GM12878 (cell line): ENCODE measurements at regions of chr5 and their contacts with region 1.

Region 1: GRCh38 chr5:143200781-143201398 is 202.6 kb downstream of the NR3C1 start:
- DNase-seq: no peak
- ATAC-seq: peak; percentile 69
- H3K4me3 ChIP-seq: no peak overlapping the region
- H3K27ac ChIP-seq: peak overlapping the region; percentile 14; the same call in 1 of the 2 replicates
- H3K4me1 ChIP-seq: peaks cover 17% of the 10 kb centered on the region
- H3K27me3 ChIP-seq: no peaks in the 10 kb centered on the region
- CTCF ChIP-seq: no peak
- EP300 ChIP-seq: no peak
- POLR2A ChIP-seq: no peak
- RAD21 ChIP-seq: no peak

Region 2: DNA sequence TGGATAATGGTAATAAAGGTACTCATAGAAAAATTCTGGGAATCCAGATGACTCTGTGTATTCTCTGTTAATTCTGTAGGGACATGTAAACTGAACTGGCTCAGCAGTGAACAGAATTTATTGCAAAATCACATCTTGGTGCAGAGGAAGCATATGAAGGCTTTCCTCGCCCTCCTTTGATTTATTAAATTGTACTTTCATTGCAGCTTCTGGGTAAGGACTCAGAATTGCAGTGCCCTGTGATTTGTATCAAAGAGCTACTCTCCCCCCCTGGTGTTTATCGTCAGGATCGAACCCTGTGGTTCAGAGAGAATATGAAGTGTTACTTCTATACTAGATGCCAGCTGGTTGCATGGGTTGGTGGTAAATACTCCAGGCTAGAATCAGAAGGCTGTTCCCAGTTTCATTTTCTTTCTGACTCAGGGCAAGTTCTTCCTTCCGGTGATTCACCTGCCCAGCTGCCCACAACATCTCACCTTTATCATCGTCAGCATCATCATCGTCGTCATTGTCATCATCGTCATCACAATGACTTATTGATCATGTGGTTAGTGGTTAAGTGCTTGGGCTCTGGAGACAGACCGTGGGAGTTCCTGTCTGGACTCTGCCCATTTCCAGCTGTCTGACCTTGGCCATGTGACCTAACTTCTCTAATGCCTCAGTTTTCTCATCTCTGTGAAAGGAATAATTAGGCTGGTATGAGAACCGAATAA is 191.9 kb before region 1 on chr5:
- CTCF ChIA-PET with region 1: interaction called, 21 read pairs
- POLR2A ChIA-PET with region 1: interaction called, 17 read pairs
- RAD21 ChIA-PET with region 1: interaction called, 52 read pairs
- SMC1A ChIA-PET with region 1: interaction called, 62 read pairs
- in situ Hi-C with region 1: no loop called
- intact Hi-C with region 1: loop called (anchors 2 kb)
- DNase-seq: peak; percentile 98
- ATAC-seq: peak; percentile 90
- H3K4me3 ChIP-seq: no peak overlapping the region
- H3K27ac ChIP-seq: peak overlapping the region; percentile 47; the same call in 1 of the 2 replicates
- H3K4me1 ChIP-seq: peaks cover 27% of the 10 kb centered on the region
- H3K27me3 ChIP-seq: no peaks in the 10 kb centered on the region
- CTCF ChIP-seq: peak; percentile 13 to 25 (median 25); a peak in 2 of 6 replicates
- EP300 ChIP-seq: peak; percentile 100
- POLR2A ChIP-seq: no peak
- RAD21 ChIP-seq: 0 out of 2 replicates have a peak, but pooled peaks have one; percentile 30

Region 3: GRCh38 chr5:143023411-143024096 is 177.3 kb before region 1 on chr5:
- CTCF ChIA-PET with region 1: interaction called, 5 read pairs
- POLR2A ChIA-PET with region 1: interaction called, 23 read pairs
- RAD21 ChIA-PET with region 1: interaction called, 40 read pairs
- SMC1A ChIA-PET with region 1: interaction called, 138 read pairs
- in situ Hi-C with region 1: loop called (anchors 5 kb)
- intact Hi-C with region 1: loop called (anchors 2 kb)
- DNase-seq: peak; percentile 87
- ATAC-seq: peak; percentile 65
- H3K4me3 ChIP-seq: 0 out of 2 replicates have a peak overlapping the region, but pooled peaks have one; percentile 21
- H3K27ac ChIP-seq: peak overlapping the region; percentile 95
- H3K4me1 ChIP-seq: peaks cover 77% of the 10 kb centered on the region
- H3K27me3 ChIP-seq: no peaks in the 10 kb centered on the region
- CTCF ChIP-seq: no peak; a peak in 1 of 6 replicates
- EP300 ChIP-seq: peak; percentile 52 to 66; a peak in 2 of 4 replicates
- POLR2A ChIP-seq: peak; percentile 60
- RAD21 ChIP-seq: peak; percentile 36

Region 4: DNA sequence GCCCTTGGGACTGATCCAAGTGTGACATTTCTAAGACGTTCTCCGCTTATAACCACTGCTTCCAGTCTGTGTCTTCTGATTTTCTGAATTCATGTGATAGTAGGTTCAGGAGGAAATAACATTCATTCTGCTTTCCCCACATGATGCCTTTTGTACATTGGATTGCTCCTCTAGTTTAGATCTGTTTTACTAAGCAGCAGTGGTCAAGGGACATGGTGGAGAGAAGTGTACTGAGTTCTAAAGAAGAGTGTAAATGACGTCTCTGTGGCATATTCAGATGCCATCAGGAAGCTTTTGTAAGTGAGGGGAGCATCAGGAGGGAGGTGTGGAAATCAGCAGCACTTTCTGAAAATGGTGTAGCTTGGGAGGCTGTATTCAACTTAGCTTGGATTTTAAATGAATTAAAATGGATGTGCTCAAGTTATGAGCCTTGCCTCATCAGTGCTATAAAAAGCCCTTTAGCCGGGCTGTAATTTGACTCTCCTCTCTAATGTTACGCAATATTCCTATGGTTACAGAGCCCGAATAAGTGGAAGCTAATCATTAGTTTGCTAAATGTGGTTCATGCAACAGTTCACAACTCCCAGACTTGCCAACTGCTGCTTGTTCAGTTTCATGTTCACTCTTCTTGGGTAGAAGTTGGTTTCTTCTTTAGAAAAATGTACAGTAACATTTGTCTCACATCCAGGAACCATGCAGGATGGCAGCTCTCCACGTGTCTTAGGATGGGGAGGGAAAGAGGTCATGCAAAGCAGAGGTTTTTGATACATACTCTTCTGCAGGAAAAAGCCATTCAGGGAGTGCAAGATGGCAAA is 149.4 kb before region 1 on chr5:
- CTCF ChIA-PET with region 1: interaction called, 3 read pairs
- POLR2A ChIA-PET with region 1: interaction called, 16 read pairs
- RAD21 ChIA-PET with region 1: interaction called, 14 read pairs
- SMC1A ChIA-PET with region 1: interaction called, 50 read pairs
- in situ Hi-C with region 1: loop called (anchors 5 kb)
- intact Hi-C with region 1: loop called (anchors 1 kb)
- DNase-seq: no peak
- ATAC-seq: peak; percentile 10
- H3K4me3 ChIP-seq: no peak overlapping the region
- H3K27ac ChIP-seq: no peak overlapping the region; the same call in 1 of the 2 replicates
- H3K4me1 ChIP-seq: peaks cover 38% of the 10 kb centered on the region
- H3K27me3 ChIP-seq: no peaks in the 10 kb centered on the region
- CTCF ChIP-seq: no peak
- EP300 ChIP-seq: no peak
- POLR2A ChIP-seq: no peak
- RAD21 ChIP-seq: no peak

Region 5: GRCh38 chr5:143119291-143119769 is 81.6 kb before region 1 on chr5:
- CTCF ChIA-PET with region 1: no interaction called
- POLR2A ChIA-PET with region 1: no interaction called
- RAD21 ChIA-PET with region 1: interaction called, 13 read pairs
- SMC1A ChIA-PET with region 1: interaction called, 38 read pairs
- in situ Hi-C with region 1: no loop called
- intact Hi-C with region 1: no loop called
- DNase-seq: no peak
- ATAC-seq: peak; percentile 82
- H3K4me3 ChIP-seq: no peak overlapping the region
- H3K27ac ChIP-seq: peak overlapping the region; percentile 35
- H3K4me1 ChIP-seq: peaks cover 23% of the 10 kb centered on the region
- H3K27me3 ChIP-seq: no peaks in the 10 kb centered on the region
- CTCF ChIP-seq: no peak
- EP300 ChIP-seq: no peak
- POLR2A ChIP-seq: no peak
- RAD21 ChIP-seq: no peak

Region 6: DNA sequence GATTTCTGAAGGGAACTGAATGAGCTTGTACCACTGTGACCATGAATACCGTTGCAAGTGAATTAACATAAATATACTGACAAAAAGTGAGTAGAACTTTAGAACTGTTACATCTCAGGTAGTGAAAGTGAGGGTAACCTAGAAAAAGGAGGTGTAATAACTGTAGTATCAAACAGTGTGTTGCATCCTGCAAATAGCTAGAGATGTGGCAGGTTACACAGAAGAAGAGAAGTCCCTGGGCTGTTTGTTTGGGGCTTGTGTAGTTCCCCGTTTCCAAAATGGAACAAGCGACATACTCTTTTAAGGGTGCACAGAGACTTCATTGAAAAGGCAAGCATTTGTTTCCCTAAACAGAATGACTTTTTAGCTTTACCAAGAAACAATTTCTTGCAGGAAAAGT is 12.2 kb before region 1 on chr5:
- CTCF ChIA-PET with region 1: interaction called, 82 read pairs
- POLR2A ChIA-PET with region 1: interaction called, 23 read pairs
- RAD21 ChIA-PET with region 1: interaction called, 227 read pairs
- SMC1A ChIA-PET with region 1: interaction called, 193 read pairs
- in situ Hi-C with region 1: no loop called
- intact Hi-C with region 1: loop called (anchors 1 kb)
- DNase-seq: no peak
- ATAC-seq: peak; percentile 52
- H3K4me3 ChIP-seq: no peak overlapping the region
- H3K27ac ChIP-seq: peak overlapping the region; percentile 66
- H3K4me1 ChIP-seq: peaks cover 47% of the 10 kb centered on the region
- H3K27me3 ChIP-seq: no peaks in the 10 kb centered on the region
- CTCF ChIP-seq: no peak
- EP300 ChIP-seq: 0 out of 4 replicates have a peak, but pooled peaks of 1 of the 2 experiments have one; percentile 11
- POLR2A ChIP-seq: no peak
- RAD21 ChIP-seq: no peak

Region 7: DNA sequence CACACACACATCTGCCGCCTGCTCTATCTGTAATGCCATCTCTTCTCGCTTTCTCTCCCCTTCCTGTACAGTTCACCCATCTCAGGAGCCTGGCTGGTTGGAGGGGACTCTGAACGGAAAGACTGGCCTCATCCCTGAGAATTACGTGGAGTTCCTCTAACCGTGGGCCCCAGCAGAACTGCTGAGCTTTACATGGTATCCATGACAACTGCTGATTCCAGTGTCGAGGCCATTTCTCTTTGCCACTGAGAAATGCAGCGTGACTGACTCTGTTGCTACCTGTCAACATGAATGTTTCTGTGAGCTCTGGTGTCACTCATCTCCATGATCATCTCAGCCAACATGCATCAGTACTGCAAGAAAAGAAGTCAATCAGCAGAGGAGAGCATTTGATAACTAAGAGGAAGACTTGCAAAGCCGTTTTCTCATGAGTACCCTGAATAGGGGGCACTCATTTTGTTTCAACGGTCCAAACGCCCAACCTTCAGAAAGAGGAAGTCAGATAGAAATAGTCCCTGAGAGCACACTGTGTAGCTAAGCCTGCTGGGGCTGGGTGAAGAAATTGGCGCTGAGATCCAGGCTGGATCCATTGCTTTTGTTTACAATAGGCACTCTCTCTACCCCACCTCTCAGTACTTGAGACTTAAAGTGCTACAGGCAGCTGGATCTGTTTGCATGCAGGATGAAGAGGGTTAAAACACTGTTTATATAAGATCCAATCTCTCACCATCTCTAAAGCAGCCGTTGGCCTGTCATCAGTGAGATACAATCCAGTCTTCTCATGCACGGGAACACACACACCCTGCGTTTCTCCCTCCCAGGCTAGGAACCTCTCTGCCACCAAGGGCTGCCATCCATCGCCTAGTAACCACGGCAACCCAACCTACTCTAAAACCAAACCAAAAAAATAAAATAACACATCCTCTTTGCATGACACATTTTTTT is 21.7 kb after region 1 on chr5:
- CTCF ChIA-PET with region 1: interaction called, 75 read pairs
- POLR2A ChIA-PET with region 1: interaction called, 114 read pairs
- RAD21 ChIA-PET with region 1: interaction called, 482 read pairs
- SMC1A ChIA-PET with region 1: interaction called, 423 read pairs
- in situ Hi-C with region 1: no loop called
- intact Hi-C with region 1: no loop called
- DNase-seq: peak; percentile 82
- ATAC-seq: peak; percentile 70
- H3K4me3 ChIP-seq: no peak overlapping the region
- H3K27ac ChIP-seq: peak overlapping the region; percentile 100
- H3K4me1 ChIP-seq: peaks cover 60% of the 10 kb centered on the region
- H3K27me3 ChIP-seq: no peaks in the 10 kb centered on the region
- CTCF ChIP-seq: no peak
- EP300 ChIP-seq: 0 out of 4 replicates have a peak, but pooled peaks of 1 of the 2 experiments have one; percentile 50
- POLR2A ChIP-seq: peak; percentile 50; the same call in 1 of the 2 replicates
- RAD21 ChIP-seq: no peak; the same call in 1 of the 2 replicates

Region 8: GRCh38 chr5:143985832-143986485 is 785.1 kb after region 1 on chr5:
- CTCF ChIA-PET with region 1: no interaction called
- POLR2A ChIA-PET with region 1: no interaction called
- RAD21 ChIA-PET with region 1: no interaction called
- SMC1A ChIA-PET with region 1: no interaction called
- in situ Hi-C with region 1: no loop called
- intact Hi-C with region 1: no loop called
- DNase-seq: no peak
- ATAC-seq: no peak
- H3K4me3 ChIP-seq: no peak overlapping the region
- H3K27ac ChIP-seq: no peak overlapping the region
- H3K4me1 ChIP-seq: no peaks in the 10 kb centered on the region
- H3K27me3 ChIP-seq: no peaks in the 10 kb centered on the region
- CTCF ChIP-seq: no peak
- EP300 ChIP-seq: no peak
- POLR2A ChIP-seq: no peak
- RAD21 ChIP-seq: no peak